ENCODE measurements at regions of chr4 and their contacts with region 1.

Region 1: DNA sequence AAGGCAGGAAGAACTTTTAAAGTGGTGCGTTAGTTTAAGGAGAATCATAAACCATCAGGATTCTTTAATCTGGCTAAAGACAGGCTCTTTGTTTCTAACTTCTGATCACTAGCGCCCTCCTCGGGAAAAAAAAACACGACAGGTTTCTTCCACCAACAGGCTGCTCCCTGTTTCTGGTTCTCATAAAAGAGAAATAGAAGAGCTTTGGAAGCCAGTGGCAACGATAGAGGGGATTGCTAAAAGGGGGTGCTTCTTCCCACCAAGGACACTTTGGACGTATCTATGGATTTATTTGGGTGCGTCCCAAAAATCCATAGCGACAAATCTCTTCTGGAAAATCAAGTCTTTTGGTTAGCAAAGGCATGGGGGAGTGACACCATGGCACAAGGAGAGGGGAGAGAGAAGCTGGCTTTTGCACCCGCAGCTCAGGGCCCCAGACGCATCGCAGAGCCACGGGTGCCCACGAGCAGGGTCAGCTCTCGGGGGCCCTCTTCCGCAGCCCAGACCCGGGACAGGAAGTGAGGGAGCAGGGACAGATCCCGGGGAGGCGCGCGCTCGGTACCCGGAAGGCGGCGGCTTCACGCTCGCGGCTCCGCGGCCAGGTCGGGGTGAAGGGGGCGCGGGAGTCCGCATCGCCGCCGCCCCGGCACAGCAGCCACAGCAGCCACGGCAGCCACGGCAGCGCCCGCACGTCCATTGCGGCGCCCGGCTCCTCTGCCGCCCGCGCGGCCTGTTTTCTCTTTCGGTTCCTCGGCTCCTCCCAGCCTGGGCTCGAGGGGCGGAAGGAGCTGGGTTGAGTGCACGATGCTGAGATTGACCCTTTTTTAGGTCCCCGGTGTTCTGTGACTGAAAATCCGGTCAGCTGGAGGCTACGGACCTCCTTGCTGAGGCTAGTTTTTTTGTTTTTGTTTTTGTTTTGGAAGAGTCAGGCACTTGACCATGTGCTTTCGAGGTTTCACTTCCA is at the start of gene CTSO:
- DNase-seq: peak; percentile 65 to 96 (median 74)

Region 2: GRCh38 chr4:155403886-155404285 is 549.5 kb before region 1 on chr4:
- intact Hi-C with region 1: loop called (anchors 10 kb)
- DNase-seq: no peak

Region 3: DNA sequence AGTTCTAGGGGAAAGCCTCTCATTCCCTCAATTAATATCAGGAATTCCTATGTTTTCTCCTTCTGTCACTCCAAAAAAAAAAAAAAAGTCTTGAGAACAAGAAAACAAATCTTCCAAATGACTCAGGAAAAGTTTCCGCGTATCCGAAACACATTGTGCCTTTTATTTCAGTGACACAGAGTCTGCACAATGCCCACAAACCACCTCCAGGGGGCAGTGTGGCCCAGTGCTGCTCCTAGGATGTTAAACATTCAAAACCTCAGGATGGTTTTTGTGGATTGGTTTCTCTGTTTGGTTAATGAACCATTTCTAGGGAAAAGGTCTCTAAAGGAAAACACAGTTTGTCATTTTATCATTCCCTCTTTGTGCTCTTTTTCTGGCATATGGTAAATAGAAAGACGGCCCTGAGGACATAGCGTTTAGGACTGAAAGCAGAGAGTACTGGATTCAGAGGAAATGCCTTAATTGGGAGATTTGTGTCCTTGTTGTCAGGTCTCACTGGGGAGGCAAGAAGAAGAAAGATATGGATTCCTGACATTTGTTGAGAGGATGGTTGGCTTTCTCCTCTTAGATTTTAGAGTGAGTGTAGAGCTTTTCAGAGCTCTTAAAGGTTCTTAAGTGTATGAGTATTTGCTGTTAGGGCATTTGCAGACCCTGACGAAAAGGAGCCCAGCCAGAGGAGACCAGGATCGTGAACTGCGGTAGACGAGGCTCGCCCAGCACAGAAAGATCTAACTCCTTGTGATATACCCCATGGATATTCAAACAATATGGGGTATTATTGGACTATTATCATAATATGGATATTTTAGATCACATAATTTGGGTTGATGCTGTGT is 510.9 kb before region 1 on chr4:
- intact Hi-C with region 1: loop called (anchors 5 kb)
- DNase-seq: peak; percentile 67 to 97 (median 88)

Region 4: GRCh38 chr4:155809835-155810234 is 143.6 kb before region 1 on chr4:
- intact Hi-C with region 1: loop called (anchors 5 kb)
- DNase-seq: no peak

Measured in posterior cingulate gyrus (tissue), 11 donors.